Adrenal gland (tissue), 19 donors: ENCODE measurements at regions of chr12 and their contacts with region 1.

Region 1: GRCh38 chr12:132614861-132615578 is 3.6 kb upstream of the P2RX2 start:
- DNase-seq: peak; percentile 73 to 90 (median 88)
- H3K4me3 ChIP-seq: no peak overlapping the region
- H3K27ac ChIP-seq: no peak overlapping the region
- H3K4me1 ChIP-seq: peaks cover 0 to 3% of the 10 kb centered on the region in 2 donors
- H3K27me3 ChIP-seq: peaks cover 50% of the 10 kb centered on the region
- CTCF ChIP-seq: peak; percentile 83 to 91 (median 88)
- POLR2A ChIP-seq: no peak

Region 2: DNA sequence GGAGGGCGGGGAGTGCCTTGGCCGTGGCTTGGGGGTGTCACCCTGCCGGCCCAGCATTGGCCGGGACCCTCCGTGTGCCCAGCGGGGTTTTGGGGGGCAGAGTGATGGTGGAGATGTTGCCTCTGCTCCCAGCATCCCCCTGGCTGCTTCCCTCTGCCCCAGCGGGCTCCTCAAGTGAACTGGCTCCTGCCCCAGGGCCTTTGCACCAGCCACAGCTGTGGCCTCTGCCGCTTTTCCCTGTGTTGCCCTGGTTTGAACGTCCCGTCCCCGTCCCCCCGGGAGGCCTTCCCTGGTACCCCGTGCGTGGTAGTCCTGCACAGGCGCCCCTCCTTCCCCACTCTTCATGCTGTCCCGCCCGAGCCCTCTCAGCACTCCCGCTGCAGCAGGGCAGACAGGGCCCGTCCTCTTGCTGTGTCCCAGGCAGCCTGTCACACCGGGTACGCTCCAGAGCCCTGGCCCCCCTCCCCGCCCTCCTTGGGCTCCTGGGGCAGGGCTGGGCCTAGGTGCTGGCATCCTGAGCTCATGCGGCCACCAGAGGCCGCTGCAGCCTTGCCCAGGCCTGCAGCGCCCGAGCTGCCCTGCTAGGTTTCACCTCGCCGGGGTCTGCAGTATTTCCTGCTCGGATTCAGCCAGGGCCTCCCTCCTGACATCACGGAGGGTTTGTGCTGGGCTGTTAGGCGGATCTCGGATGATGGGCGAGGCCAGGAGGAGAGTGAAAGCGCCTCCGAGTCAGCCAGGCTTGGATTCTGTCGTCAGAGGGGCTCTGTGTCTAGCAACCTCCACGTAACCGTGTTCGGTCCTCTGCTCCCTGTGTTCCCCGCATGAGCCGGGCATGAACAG is 461.3 kb before region 1 on chr12:
- intact Hi-C with region 1: loop called in 1 of 2 experiments (anchors 10 kb)
- DNase-seq: peak; percentile 52 to 82 (median 70)
- H3K4me3 ChIP-seq: no peak overlapping the region
- H3K27ac ChIP-seq: no peak overlapping the region
- H3K4me1 ChIP-seq: peaks cover 0 to 4% of the 10 kb centered on the region in 2 donors
- H3K27me3 ChIP-seq: no peaks in the 10 kb centered on the region
- CTCF ChIP-seq: peak; percentile 80 to 94 (median 88)
- POLR2A ChIP-seq: no peak

Region 3: GRCh38 chr12:132414634-132415326 is 200.2 kb before region 1 on chr12:
- intact Hi-C with region 1: loop called (anchors 2 to 10 kb)
- DNase-seq: peak; percentile 80 to 89 (median 84)
- H3K4me3 ChIP-seq: no peak overlapping the region
- H3K27ac ChIP-seq: no peak overlapping the region
- H3K4me1 ChIP-seq: no peaks in the 10 kb centered on the region
- H3K27me3 ChIP-seq: peaks cover 19% of the 10 kb centered on the region
- CTCF ChIP-seq: peak; percentile 89 to 96 (median 93)
- POLR2A ChIP-seq: no peak

Region 4: GRCh38 chr12:132427999-132428935 is 186.8 kb before region 1 on chr12:
- intact Hi-C with region 1: no loop called
- DNase-seq: no peak
- H3K4me3 ChIP-seq: no peak overlapping the region
- H3K27ac ChIP-seq: no peak overlapping the region
- H3K4me1 ChIP-seq: peaks cover 0 to 3% of the 10 kb centered on the region in 2 donors
- H3K27me3 ChIP-seq: peaks cover 8% of the 10 kb centered on the region
- CTCF ChIP-seq: no peak
- POLR2A ChIP-seq: no peak

Region 5: GRCh38 chr12:132651444-132652100 is 36.6 kb after region 1 on chr12:
- intact Hi-C with region 1: no loop called
- DNase-seq: no peak
- H3K4me3 ChIP-seq: no peak overlapping the region
- H3K27ac ChIP-seq: no peak overlapping the region
- H3K4me1 ChIP-seq: no peaks in the 10 kb centered on the region
- H3K27me3 ChIP-seq: no peaks in the 10 kb centered on the region
- CTCF ChIP-seq: no peak
- POLR2A ChIP-seq: no peak